ENCODE measurements at regions of chr15 and their contacts with region 1.

Region 1: DNA sequence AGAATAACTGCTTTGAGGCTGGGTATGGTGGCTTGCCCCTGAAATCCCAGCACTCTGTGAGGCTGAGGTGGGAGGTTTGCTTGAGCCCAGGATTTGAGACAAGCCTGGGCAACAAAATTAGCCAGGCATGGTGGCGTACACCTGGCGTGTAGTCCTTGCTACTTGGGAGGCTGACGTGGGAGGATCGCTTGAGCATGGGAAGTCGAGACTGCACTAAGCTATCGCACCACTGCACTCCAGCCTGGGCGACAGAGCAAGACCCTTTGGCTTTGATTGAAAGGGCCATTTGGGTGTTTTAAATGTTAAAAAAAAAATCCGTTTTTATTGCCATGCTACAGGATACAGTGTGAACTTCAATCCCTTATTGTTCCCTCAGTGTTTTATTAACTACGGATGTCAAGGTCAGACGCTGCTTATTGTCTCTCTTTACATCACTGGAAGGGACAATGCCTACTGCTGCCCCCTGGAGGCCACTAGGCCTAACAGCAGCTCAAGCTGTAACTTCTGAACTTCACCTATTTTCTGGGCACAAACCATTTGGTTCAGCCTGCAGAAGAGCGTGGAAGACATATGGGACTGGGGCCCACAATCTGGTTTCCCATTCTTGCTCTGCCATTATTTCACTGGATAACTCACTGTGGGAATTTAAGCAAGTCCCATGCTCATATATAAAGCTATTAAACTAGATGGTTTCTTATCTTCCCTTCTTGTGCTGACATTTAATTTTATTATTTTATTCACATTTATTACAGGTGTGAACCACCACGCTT is 15.3 kb upstream of the IREB2 start:
- DNase-seq: peak; percentile 72
- ATAC-seq: peak; percentile 87
- H3K4me3 Mint-ChIP-seq: no peak overlapping the region
- H3K27ac Mint-ChIP-seq: no peak overlapping the region
- H3K4me1 Mint-ChIP-seq: no peaks in the 10 kb centered on the region
- H3K27me3 Mint-ChIP-seq: peaks cover 3% of the 10 kb centered on the region; the same call in 1 of the 2 replicates
- CTCF ChIP-seq: peak; percentile 78

Region 2: DNA sequence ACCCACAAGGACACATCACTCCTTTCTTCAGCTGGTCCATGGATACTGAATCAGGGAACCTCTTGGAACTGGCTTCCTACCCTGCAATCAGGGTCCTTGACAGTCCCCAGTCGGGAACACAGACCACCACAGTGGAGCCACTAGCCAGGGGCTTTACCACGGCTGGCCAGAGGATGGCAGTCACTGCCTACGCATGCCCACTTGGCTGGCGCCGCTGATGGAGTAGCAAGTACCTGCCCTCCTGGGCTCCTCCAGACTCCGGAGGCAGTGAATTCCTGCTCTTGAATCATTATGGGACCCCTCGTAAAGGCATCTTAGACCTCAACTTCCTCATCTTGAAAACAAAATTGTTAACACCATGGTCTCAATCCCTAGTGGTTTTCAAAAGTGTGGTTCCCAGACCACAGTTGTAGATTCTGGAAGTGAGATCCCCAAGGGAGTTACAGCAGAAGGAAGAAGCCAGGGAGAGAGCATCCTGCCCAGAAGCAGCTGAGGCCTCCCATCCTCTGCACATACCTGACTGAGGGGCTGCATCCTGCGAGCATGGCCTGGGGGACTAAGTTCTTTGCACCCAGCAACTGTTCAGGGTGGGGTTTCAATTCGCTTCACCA is 114.2 kb before region 1 on chr15:
- CTCF ChIA-PET with region 1: interaction called, 34 read pairs
- POLR2A ChIA-PET with region 1: no interaction called
- DNase-seq: peak; percentile 95
- ATAC-seq: peak; percentile 93
- H3K4me3 Mint-ChIP-seq: no peak overlapping the region
- H3K27ac Mint-ChIP-seq: no peak overlapping the region
- H3K4me1 Mint-ChIP-seq: peaks cover 17% of the 10 kb centered on the region
- H3K27me3 Mint-ChIP-seq: no peaks in the 10 kb centered on the region
- CTCF ChIP-seq: peak; percentile 86

Region 3: DNA sequence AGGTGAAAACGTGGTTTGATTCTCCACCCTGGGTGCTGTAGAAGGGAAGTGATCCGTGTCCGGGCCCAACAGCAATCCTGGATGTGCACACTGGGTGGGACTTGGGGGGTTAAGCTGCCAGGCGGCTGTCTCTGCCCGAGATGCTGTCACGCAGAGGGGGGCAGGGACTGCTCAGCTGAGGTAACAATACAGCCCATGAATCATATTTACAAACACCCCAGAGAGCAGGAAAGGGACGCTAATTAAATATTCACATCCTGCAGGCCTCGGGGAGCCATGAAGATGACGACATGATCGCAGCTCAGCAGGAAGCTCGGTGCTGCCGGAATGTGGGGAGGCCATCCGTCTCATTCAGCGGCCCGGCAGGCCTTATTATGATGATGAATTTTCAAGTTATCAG is 100.5 kb before region 1 on chr15:
- CTCF ChIA-PET with region 1: interaction called, 31 read pairs
- POLR2A ChIA-PET with region 1: no interaction called
- DNase-seq: no peak
- ATAC-seq: peak; percentile 34
- H3K4me3 Mint-ChIP-seq: no peak overlapping the region; the same call in 1 of the 2 replicates
- H3K27ac Mint-ChIP-seq: peak overlapping the region; percentile 54
- H3K4me1 Mint-ChIP-seq: peaks cover 41% of the 10 kb centered on the region
- H3K27me3 Mint-ChIP-seq: no peaks in the 10 kb centered on the region
- CTCF ChIP-seq: no peak

Region 4: DNA sequence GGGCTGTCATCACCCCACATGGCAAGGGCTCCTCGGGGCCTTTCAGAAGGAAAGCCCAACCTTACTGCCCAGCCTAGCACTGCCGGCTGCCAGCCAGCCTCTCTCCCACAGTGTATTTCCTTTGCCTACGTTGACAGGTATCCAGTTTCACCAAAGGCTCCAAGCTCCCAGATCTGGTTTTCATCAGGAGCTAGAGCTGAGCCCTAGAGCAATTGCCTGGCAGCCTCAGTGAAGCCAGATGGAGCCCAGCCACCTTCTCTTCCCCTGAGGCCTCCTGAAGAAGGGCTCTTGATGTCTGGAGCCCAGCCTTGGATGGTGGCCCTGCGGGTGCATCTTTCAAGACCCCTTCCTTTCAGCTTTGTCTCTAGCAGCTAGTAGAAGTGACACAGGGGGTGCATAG is 62.3 kb before region 1 on chr15:
- CTCF ChIA-PET with region 1: interaction called, 15 read pairs
- POLR2A ChIA-PET with region 1: no interaction called
- DNase-seq: no peak
- ATAC-seq: peak; percentile 43
- H3K4me3 Mint-ChIP-seq: no peak overlapping the region
- H3K27ac Mint-ChIP-seq: no peak overlapping the region
- H3K4me1 Mint-ChIP-seq: peaks cover 30% of the 10 kb centered on the region
- H3K27me3 Mint-ChIP-seq: no peaks in the 10 kb centered on the region
- CTCF ChIP-seq: no peak

Region 5: DNA sequence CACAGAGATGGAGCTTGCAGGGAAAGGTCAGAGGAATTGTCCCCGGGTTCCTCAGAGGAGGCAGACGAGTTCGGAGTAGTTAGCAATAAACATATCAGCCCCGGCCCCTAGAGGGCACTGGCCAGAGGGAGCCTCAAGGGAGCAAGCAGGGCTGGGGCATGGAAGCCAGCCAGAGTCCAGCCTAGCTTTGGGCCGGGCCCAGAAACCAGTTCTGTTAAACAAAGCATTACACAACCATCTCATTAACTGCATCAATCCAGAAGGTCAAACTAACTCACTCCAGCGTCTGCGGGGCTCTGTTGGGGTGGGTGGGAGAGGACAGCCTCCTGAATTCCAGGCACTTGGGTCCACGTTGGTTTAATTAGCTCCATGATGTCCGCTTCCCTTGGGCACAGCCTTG is 25.8 kb before region 1 on chr15:
- CTCF ChIA-PET with region 1: interaction called, 15 read pairs
- POLR2A ChIA-PET with region 1: no interaction called
- DNase-seq: peak; percentile 45
- ATAC-seq: peak; percentile 14; the same call in 1 of the 2 replicates
- H3K4me3 Mint-ChIP-seq: no peak overlapping the region
- H3K27ac Mint-ChIP-seq: no peak overlapping the region
- H3K4me1 Mint-ChIP-seq: peaks cover 66% of the 10 kb centered on the region
- H3K27me3 Mint-ChIP-seq: no peaks in the 10 kb centered on the region; the same call in 1 of the 2 replicates
- CTCF ChIP-seq: no peak

Region 6: DNA sequence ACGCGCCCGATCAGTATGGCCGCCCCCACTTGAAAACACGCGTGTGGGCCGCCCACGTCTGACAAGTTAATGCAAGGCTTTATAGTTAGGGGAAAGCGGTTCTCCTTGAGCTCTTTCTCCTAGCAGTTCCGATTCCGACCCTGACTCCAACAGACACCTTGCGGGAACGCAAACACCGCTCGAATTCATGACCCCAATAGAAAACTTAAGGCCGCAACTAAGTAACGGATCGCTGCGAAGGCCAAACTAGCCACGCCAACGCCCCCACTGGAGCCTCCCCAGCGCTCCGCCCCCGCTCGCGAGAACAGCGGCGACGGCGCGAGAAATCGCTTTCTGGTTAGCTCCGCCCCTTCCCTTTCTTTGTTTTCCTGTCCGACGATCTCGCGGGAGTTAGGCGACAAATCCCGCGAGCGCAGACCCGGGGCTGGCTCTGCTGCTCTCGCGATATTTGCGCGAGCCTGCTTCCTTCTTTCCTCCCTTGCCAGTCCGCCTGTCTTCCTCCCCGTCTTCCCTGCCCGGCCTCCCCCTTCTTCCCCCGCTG is 15.1 kb after region 1 on chr15 and contains the start of gene IREB2:
- CTCF ChIA-PET with region 1: interaction called, 21 read pairs
- POLR2A ChIA-PET with region 1: interaction called, 5 read pairs
- DNase-seq: peak; percentile 97
- ATAC-seq: peak; percentile 90
- H3K4me3 Mint-ChIP-seq: peak within 1 kb of the TSS; percentile 86
- H3K27ac Mint-ChIP-seq: peak within 1 kb of the TSS; percentile 96
- H3K4me1 Mint-ChIP-seq: peaks cover 18% of the 10 kb centered on the region
- H3K27me3 Mint-ChIP-seq: no peaks in the 10 kb centered on the region
- CTCF ChIP-seq: no peak
- total RNA-seq, gene IREB2: 86.0 to 89.5 TPM (median 89.3 TPM) in 3 replicates

Region 7: DNA sequence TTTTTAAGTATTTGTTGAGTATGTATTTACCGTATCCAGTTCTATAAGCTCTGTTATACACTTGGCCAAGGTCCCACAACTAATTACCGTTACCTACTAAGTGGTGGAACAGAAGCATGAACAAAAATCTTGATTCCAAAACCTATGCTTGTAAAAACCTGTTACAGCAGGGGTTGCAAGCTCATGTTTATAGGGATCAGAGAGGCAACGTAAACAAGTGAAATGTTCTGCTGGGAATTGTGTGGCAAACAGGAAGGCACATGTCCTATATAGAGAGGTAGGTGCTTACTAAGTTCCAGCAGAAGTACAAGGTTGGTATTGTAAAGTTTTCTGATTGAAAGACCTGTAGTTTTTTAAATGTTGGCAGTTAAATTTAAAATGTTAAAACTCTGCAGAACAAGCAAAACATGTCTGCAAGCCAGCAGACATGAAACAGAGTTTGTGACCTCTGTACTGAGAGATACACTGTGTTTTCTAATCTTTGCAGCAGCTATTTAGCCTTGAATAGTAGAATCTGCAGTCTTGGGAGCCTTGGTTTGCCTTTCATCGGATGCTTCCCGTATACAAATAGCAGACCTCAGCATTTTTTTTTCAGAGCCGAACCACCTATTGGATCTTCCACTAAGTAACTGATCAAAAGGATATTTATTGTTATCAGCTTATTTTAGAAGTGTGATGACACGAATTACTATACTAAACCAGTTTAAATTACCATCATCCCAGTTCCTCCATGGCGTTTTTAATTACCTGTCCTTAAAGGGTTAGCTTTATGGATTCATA is 26.7 kb after region 1 on chr15:
- CTCF ChIA-PET with region 1: no interaction called
- POLR2A ChIA-PET with region 1: no interaction called
- DNase-seq: no peak
- ATAC-seq: no peak
- H3K4me3 Mint-ChIP-seq: no peak overlapping the region
- H3K27ac Mint-ChIP-seq: no peak overlapping the region
- H3K4me1 Mint-ChIP-seq: peaks cover 26% of the 10 kb centered on the region
- H3K27me3 Mint-ChIP-seq: no peaks in the 10 kb centered on the region
- CTCF ChIP-seq: no peak

Measured in WTC11 (cell line).